Mammary epithelial cell (primary cell): ENCODE measurements at regions of chr17 and their contacts with region 1.

Region 1: DNA sequence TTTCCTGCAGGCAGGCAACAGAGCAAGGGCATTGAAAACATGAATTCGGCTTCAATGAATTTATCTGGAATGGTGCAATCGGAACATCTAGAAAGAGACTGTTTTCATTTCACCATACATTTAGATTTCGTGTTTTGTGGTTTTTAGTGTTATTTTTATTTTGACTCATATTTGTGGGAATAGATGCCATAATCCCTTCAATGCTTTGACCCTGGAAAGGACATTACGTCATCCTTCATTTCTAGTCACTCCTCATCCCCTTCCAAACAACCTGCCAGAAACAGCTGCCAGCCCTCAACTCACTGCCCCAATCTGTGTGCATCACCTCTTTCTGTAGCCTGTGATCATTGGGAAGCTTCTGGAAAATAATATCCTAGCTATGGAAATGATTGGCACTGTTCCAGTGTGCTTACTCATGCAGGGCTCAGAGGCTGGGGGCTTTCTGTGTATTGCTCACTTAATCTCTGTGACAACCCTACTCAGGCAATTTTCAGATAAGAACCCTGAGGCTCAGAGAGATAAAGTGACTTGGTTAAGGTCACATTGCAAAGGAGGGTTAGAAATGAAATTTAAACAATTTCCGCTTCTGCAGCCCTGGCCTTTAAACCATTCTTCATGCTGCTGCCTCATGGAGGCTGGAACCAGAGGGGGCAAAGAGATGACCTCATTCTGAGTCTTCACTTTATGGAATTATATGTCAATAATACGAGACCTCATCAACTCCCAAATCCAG is 9.5 kb upstream of the KSR1 start:
- DNase-seq: peak; percentile 80
- H3K4me3 ChIP-seq: no peak overlapping the region
- H3K27ac ChIP-seq: no peak overlapping the region
- H3K4me1 ChIP-seq: peaks cover 9% of the 10 kb centered on the region
- H3K27me3 ChIP-seq: peaks cover 2% of the 10 kb centered on the region
- CTCF ChIP-seq: no peak

Region 2: GRCh38 chr17:27345141-27345904 is 101.4 kb before region 1 on chr17:
- CTCF ChIA-PET with region 1: no interaction called
- dilution Hi-C with region 1: loop called (anchors 10 kb)
- in situ Hi-C with region 1: no loop called
- intact Hi-C with region 1: no loop called
- DNase-seq: no peak
- H3K4me3 ChIP-seq: no peak overlapping the region
- H3K27ac ChIP-seq: no peak overlapping the region
- H3K4me1 ChIP-seq: peaks cover 12% of the 10 kb centered on the region
- H3K27me3 ChIP-seq: no peaks in the 10 kb centered on the region
- CTCF ChIP-seq: no peak

Region 3: GRCh38 chr17:27367121-27367991 is 79.4 kb before region 1 on chr17:
- CTCF ChIA-PET with region 1: no interaction called
- dilution Hi-C with region 1: no loop called
- in situ Hi-C with region 1: loop called in 1 of 2 experiments (anchors 10 kb)
- intact Hi-C with region 1: no loop called
- DNase-seq: no peak
- H3K4me3 ChIP-seq: no peak overlapping the region
- H3K27ac ChIP-seq: no peak overlapping the region
- H3K4me1 ChIP-seq: no peaks in the 10 kb centered on the region
- H3K27me3 ChIP-seq: no peaks in the 10 kb centered on the region
- CTCF ChIP-seq: no peak

Region 4: GRCh38 chr17:27381007-27381501 is 65.7 kb before region 1 on chr17:
- CTCF ChIA-PET with region 1: no interaction called
- dilution Hi-C with region 1: no loop called
- in situ Hi-C with region 1: no loop called
- intact Hi-C with region 1: no loop called
- DNase-seq: peak; percentile 23
- H3K4me3 ChIP-seq: no peak overlapping the region
- H3K27ac ChIP-seq: no peak overlapping the region
- H3K4me1 ChIP-seq: peaks cover 35% of the 10 kb centered on the region
- H3K27me3 ChIP-seq: no peaks in the 10 kb centered on the region
- CTCF ChIP-seq: peak; percentile 78 to 84

Region 5: GRCh38 chr17:27506348-27507231 is 59.9 kb after region 1 on chr17:
- CTCF ChIA-PET with region 1: no interaction called
- dilution Hi-C with region 1: no loop called
- in situ Hi-C with region 1: no loop called
- intact Hi-C with region 1: no loop called
- DNase-seq: no peak
- H3K4me3 ChIP-seq: no peak overlapping the region
- H3K27ac ChIP-seq: no peak overlapping the region
- H3K4me1 ChIP-seq: no peaks in the 10 kb centered on the region
- H3K27me3 ChIP-seq: no peaks in the 10 kb centered on the region
- CTCF ChIP-seq: no peak